Right cardiac atrium (tissue), 5 donors: ENCODE measurements at regions of chr2 and their contacts with region 1.

Region 1: GRCh38 chr2:200811336-200812121 is at the start of gene BZW1:
- DNase-seq: peak; percentile 97 to 98 (median 97)
- ATAC-seq: peak; percentile 94 to 95
- H3K4me3 ChIP-seq: peak within 1 kb of the TSS; percentile 89
- H3K27ac ChIP-seq: peak within 1 kb of the TSS; percentile 98
- H3K4me1 ChIP-seq: peaks cover 3% of the 10 kb centered on the region
- H3K27me3 ChIP-seq: no peaks in the 10 kb centered on the region
- total RNA-seq, gene BZW1: 83.7 to 173 (median 100.0) TPM

Region 2: GRCh38 chr2:200306196-200306930 is 505.2 kb before region 1 on chr2 and contains the start of gene SPATS2L:
- intact Hi-C with region 1: no loop called
- DNase-seq: peak; percentile 85 to 95 (median 93)
- ATAC-seq: peak; percentile 90 to 91
- H3K4me3 ChIP-seq: peak within 1 kb of the TSS; percentile 99
- H3K27ac ChIP-seq: peak within 1 kb of the TSS; percentile 69
- H3K4me1 ChIP-seq: peaks cover 3% of the 10 kb centered on the region
- H3K27me3 ChIP-seq: no peaks in the 10 kb centered on the region
- total RNA-seq, gene SPATS2L: 115 to 147 (median 124) TPM

Region 3: GRCh38 chr2:200850512-200851256 is 39.2 kb after region 1 on chr2:
- intact Hi-C with region 1: loop called in 1 of 4 experiments (anchors 5 kb)
- DNase-seq: no peak
- ATAC-seq: peak; percentile 13 to 41
- H3K4me3 ChIP-seq: no peak overlapping the region
- H3K27ac ChIP-seq: peak overlapping the region; percentile 16
- H3K4me1 ChIP-seq: no peaks in the 10 kb centered on the region
- H3K27me3 ChIP-seq: no peaks in the 10 kb centered on the region

Region 4: GRCh38 chr2:200864176-200864976 is 52.8 kb after region 1 on chr2 and contains the start of gene CLK1:
- intact Hi-C with region 1: loop called in 1 of 4 experiments (anchors 5 kb)
- DNase-seq: peak; percentile 98 to 100 (median 99)
- ATAC-seq: peak; percentile 96
- H3K4me3 ChIP-seq: peak within 1 kb of the TSS; percentile 83
- H3K27ac ChIP-seq: peak within 1 kb of the TSS; percentile 99
- H3K4me1 ChIP-seq: no peaks in the 10 kb centered on the region
- H3K27me3 ChIP-seq: no peaks in the 10 kb centered on the region
- total RNA-seq, gene CLK1: 48.0 to 70.1 (median 64.1) TPM